Transverse colon (tissue), 4 donors: ENCODE measurements at regions of chr1 and their contacts with region 1.

Region 1: GRCh38 chr1:83959824-83960498 is 39.0 kb downstream of the TTLL7 start:
- DNase-seq: no peak
- H3K4me3 ChIP-seq: no peak overlapping the region
- H3K27ac ChIP-seq: no peak overlapping the region
- H3K4me1 ChIP-seq: no peaks in the 10 kb centered on the region
- H3K27me3 ChIP-seq: no peaks in the 10 kb centered on the region
- CTCF ChIP-seq: no peak
- EP300 ChIP-seq: no peak
- POLR2A ChIP-seq: no peak

Region 2: GRCh38 chr1:82927753-82928152 is 1032.2 kb before region 1 on chr1:
- in situ Hi-C with region 1: no loop called
- intact Hi-C with region 1: loop called (anchors 5 kb)
- DNase-seq: no peak
- H3K4me3 ChIP-seq: no peak overlapping the region
- H3K27ac ChIP-seq: no peak overlapping the region
- H3K4me1 ChIP-seq: no peaks in the 10 kb centered on the region
- H3K27me3 ChIP-seq: no peaks in the 10 kb centered on the region
- CTCF ChIP-seq: no peak
- EP300 ChIP-seq: no peak
- POLR2A ChIP-seq: no peak